Breast epithelium (tissue), 4 donors: ENCODE measurements at regions of chr1 and their contacts with region 1.

Region 1: GRCh38 chr1:87180682-87181081 is 148.0 kb upstream of the LMO4 start:
- DNase-seq: no peak
- H3K4me3 ChIP-seq: no peak overlapping the region
- H3K27ac ChIP-seq: no peak overlapping the region
- H3K4me1 ChIP-seq: no peaks in the 10 kb centered on the region
- H3K27me3 ChIP-seq: no peaks in the 10 kb centered on the region
- CTCF ChIP-seq: no peak
- POLR2A ChIP-seq: no peak

Region 2: DNA sequence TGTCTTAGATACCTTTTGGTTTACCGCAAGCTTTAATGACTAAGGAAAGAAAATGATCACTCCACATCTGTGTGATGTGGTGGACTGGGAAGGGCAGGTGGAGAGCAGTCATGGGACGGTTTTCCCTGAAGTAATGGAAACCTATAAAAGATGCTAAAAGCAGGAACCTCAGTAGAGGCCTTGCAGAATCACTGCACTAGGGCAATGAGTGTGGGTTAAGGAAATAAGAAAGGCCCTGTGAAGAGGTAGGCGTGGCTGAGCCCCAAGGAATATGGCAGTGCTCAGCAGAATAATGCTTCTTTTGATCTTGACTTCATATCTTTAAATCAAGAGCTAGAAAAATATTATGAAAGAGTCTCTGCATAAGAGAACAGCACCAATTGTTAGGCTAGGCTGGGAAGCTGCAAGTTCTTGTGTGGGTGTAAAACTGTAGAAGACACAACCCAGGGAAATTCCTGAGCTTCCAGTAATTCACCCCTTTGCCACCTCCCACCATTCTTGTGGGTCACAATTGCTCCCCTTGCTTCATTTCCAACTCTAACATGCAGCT is 583.9 kb before region 1 on chr1:
- intact Hi-C with region 1: loop called (anchors 5 kb)
- DNase-seq: peak in 1 of 2 donors; percentile 36
- H3K4me3 ChIP-seq: no peak overlapping the region
- H3K27ac ChIP-seq: peak overlapping the region; percentile 49 to 72
- H3K4me1 ChIP-seq: peaks cover 0 to 7% of the 10 kb centered on the region in 2 donors
- H3K27me3 ChIP-seq: no peaks in the 10 kb centered on the region
- CTCF ChIP-seq: no peak
- POLR2A ChIP-seq: no peak